ENCODE measurements at regions of chr3 and their contacts with region 1.

Region 1: GRCh38 chr3:55519019-55519418 is 31.9 kb upstream of the WNT5A start:
- DNase-seq: peak; percentile 48 to 86
- H3K4me3 ChIP-seq: no peak overlapping the region
- H3K27ac ChIP-seq: peak overlapping the region; percentile 97
- H3K4me1 ChIP-seq: peaks cover 37% of the 10 kb centered on the region
- H3K27me3 ChIP-seq: no peaks in the 10 kb centered on the region
- CTCF ChIP-seq: no peak

Region 2: DNA sequence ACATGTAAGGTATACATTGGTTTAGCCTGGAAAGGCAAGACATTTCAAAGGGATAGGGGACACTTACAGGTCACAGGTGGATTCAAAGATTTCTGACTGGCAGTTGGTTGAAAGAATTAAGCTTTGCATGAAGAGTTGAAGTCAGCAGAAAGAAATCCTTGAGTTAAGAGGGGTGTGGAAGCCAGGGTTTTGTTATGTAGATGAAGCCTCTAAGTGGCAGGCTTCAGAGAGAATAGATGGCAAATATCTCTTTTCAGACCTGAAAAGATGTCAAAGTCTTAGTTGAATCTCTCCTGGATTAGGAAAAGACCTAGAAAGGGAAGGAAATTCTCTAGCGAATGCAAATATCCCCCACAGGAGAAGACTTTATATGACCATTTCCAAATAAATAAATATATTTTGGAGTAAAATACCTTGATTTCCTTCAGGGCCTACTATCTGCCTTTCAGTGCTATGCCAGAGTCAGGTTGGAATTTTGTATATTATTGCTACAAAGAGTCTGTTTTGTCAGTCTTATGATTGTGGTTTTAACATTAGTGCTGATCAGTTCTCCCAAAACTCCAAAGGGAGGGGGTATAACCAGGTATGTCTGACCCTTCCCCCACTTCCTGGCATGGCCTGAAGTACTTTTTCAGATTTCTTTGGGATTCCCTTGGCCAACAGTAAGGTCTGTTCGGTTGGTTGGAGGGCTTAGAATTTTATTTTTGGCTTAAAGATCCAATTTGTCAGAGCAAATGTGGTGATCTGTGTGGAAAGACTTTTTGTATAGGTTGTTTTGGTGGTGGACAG is 877.6 kb before region 1 on chr3:
- CTCF ChIA-PET with region 1: no interaction called
- POLR2A ChIA-PET with region 1: no interaction called
- intact Hi-C with region 1: no loop called
- DNase-seq: no peak
- H3K4me3 ChIP-seq: no peak overlapping the region
- H3K27ac ChIP-seq: no peak overlapping the region
- H3K4me1 ChIP-seq: no peaks in the 10 kb centered on the region
- H3K27me3 ChIP-seq: peaks cover 27% of the 10 kb centered on the region
- CTCF ChIP-seq: no peak

Region 3: GRCh38 chr3:55500555-55501330 is 18.3 kb before region 1 on chr3:
- CTCF ChIA-PET with region 1: no interaction called
- POLR2A ChIA-PET with region 1: interaction called, 21 read pairs
- intact Hi-C with region 1: loop called (anchors 1 kb)
- DNase-seq: no peak
- H3K4me3 ChIP-seq: no peak overlapping the region
- H3K27ac ChIP-seq: no peak overlapping the region
- H3K4me1 ChIP-seq: no peaks in the 10 kb centered on the region
- H3K27me3 ChIP-seq: no peaks in the 10 kb centered on the region
- CTCF ChIP-seq: no peak

Region 4: GRCh38 chr3:55505776-55506175 is 13.2 kb before region 1 on chr3:
- CTCF ChIA-PET with region 1: no interaction called
- POLR2A ChIA-PET with region 1: interaction called, 21 read pairs
- intact Hi-C with region 1: loop called (anchors 1 kb)
- DNase-seq: peak; percentile 44 to 66
- H3K4me3 ChIP-seq: no peak overlapping the region
- H3K27ac ChIP-seq: peak overlapping the region; percentile 29; the same call in 1 of the 2 replicates
- H3K4me1 ChIP-seq: no peaks in the 10 kb centered on the region
- H3K27me3 ChIP-seq: no peaks in the 10 kb centered on the region
- CTCF ChIP-seq: no peak

Region 5: GRCh38 chr3:55591888-55592287 is 72.9 kb after region 1 on chr3:
- CTCF ChIA-PET with region 1: no interaction called
- POLR2A ChIA-PET with region 1: interaction called, 4 read pairs
- intact Hi-C with region 1: loop called (anchors 2 kb)
- DNase-seq: no peak
- H3K4me3 ChIP-seq: no peak overlapping the region
- H3K27ac ChIP-seq: peak overlapping the region; percentile 85
- H3K4me1 ChIP-seq: peaks cover 66% of the 10 kb centered on the region
- H3K27me3 ChIP-seq: no peaks in the 10 kb centered on the region
- CTCF ChIP-seq: no peak

Region 6: DNA sequence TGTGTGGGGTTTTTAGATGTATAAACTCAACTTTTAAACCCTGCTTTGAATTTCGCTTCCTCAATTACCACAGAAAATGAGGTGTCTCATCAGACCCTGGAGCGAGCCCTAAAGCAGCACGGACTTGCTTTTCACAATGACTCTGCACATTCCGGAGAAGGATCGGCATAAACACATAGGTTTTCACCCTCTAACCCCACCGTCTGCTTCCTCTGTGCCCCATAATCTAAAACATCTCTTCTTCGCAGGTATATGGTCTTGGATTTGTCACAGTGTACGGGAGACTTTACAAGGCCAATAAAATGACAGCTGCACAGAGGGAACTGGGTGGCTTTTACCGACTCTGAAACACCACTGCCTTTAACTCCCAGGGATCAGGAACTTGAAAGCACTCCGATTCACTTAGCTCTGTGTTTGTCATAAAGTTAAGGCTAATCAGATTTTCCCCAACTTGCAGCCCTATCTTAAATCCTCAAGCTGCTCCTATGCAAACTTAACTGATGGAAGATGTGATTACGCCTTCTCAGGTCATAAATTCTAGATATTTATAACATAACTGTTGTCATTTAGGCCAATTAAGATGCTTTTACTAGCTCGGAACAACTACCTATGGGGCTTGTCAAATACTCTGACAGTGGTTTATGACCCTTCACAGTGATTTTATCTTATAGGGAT is 101.5 kb after region 1 on chr3:
- CTCF ChIA-PET with region 1: no interaction called
- POLR2A ChIA-PET with region 1: interaction called, 3 read pairs
- intact Hi-C with region 1: loop called (anchors 1 kb)
- DNase-seq: peak; percentile 79 to 95
- H3K4me3 ChIP-seq: peak overlapping the region; percentile 21; the same call in 1 of the 2 replicates
- H3K27ac ChIP-seq: peak overlapping the region; percentile 100
- H3K4me1 ChIP-seq: peaks cover 82% of the 10 kb centered on the region
- H3K27me3 ChIP-seq: no peaks in the 10 kb centered on the region
- CTCF ChIP-seq: no peak